ENCODE measurements at regions of chr9 and their contacts with region 1.

Region 1: DNA sequence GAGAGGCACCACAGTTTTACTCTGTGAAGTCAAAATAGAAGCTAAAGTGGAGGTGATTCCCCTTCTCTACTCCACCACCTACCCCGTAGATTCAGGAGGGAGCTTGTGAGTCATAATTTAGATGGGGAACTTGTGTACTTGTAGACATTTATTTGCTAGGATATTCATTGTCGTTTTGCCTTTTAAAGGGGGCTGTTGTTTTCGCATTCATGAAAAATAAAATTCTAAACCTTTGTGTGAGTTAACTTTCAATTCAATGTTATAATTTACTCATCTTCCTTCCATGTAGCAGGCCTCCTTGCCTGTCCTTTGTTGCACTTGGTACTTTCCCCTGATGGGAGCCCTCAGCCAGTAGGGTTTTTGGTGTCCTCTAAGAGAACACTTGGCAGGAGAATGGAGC is 22.0 kb downstream of the SECISBP2 start:
- DNase-seq: no peak
- H3K4me3 Mint-ChIP-seq: peak overlapping the region; percentile 20
- H3K27ac Mint-ChIP-seq: peak overlapping the region; percentile 73
- H3K4me1 Mint-ChIP-seq: peaks cover 29% of the 10 kb centered on the region
- H3K27me3 Mint-ChIP-seq: no peaks in the 10 kb centered on the region

Region 2: GRCh38 chr9:89410641-89411350 is 70.5 kb after region 1 on chr9:
- intact Hi-C with region 1: loop called (anchors 5 kb)
- DNase-seq: peak; percentile 81
- H3K4me3 Mint-ChIP-seq: peak overlapping the region; percentile 76
- H3K27ac Mint-ChIP-seq: peak overlapping the region; percentile 96
- H3K4me1 Mint-ChIP-seq: peaks cover 87% of the 10 kb centered on the region
- H3K27me3 Mint-ChIP-seq: no peaks in the 10 kb centered on the region

Measured in activated CD4-positive, alpha-beta T cell treated with anti-CD3 and anti-CD28 coated beads, Interleukin-2, amount 10 ng/mL, durations not matched to agents 24 days and 14 days (primary cell).